OCI-LY7 (cell line): ENCODE measurements at regions of chr6 and their contacts with region 1.

Region 1: DNA sequence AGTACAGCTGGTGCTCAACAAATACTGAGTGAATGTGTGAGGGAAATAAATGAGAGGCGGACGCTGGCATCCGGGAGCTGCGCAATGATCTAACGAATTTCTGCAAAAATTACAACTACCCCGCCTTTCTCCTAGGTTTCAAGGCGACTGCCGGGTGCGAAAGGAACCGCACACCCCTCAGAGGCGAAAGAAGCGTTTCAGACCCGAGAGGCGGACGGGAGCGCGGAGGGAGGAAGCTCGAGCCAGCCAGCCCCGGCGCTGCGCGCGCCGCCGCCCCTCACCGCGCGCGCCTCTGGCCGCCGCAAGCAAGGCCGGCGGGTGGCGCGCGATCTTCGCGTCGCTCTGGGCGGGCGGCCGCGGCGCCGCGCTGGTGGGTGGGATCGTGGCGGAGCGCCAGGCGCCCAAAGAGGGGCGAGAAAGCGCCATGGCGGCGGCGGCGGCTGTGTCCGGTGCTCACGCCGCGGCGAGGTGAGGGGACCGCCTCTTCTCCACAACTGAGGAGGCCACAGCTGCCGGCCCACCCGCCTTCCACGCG is at the start of gene BLTP3A:
- DNase-seq: peak; percentile 92
- H3K4me3 ChIP-seq: peak within 1 kb of the TSS; percentile 79
- H3K27ac ChIP-seq: peak within 1 kb of the TSS; percentile 84
- H3K4me1 ChIP-seq: peaks cover 9% of the 10 kb centered on the region
- CTCF ChIP-seq: no peak; the same call in none of the 2 replicates
- total RNA-seq, gene BLTP3A: 11.4 and 11.9 TPM in 2 replicates

Region 2: DNA sequence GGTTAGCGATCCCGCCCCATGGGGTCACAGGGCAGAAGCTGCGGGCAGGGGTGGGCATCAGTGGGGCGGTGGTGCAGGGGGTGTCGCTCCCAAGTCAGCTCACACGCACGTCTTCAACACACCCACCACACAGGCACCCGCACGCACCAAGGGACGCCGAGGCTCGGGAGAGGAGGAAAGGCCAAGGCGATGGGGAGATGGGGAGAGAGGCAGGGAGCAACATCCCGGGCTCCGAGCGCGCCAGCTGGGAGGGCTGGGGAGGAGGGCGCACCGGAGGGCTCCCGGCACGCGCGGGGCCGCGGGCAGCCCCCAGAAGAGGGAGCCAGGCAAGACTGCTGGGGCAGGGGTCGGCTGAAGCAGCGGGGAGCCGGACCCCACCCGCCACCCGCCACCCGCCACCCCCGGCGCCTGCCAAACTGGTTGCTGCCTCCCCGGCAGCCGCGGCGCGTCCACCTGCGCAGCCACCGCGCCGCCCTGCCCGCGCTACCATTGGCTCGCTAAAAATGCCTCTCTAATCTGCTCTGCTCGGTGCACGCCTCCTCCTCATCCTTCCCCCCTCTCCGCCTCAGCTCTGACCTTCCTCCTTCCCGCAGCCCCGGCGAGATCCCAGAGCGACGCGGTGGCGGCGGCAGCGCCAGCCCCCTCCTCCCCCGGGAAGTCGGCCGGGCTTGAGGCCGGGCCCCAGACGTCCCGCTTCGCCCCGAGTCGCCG is 326.1 kb before region 1 on chr6 and contains the start of gene PACSIN1:
- CTCF ChIA-PET with region 1: no interaction called
- POLR2A ChIA-PET with region 1: interaction called, 3 read pairs
- intact Hi-C with region 1: loop called (anchors 5 kb)
- DNase-seq: peak; percentile 80
- H3K4me3 ChIP-seq: peak within 1 kb of the TSS; percentile 79
- H3K27ac ChIP-seq: peak within 1 kb of the TSS; percentile 79
- H3K4me1 ChIP-seq: peaks cover 66% of the 10 kb centered on the region
- CTCF ChIP-seq: no peak
- total RNA-seq, gene PACSIN1: 14.9 and 19.3 TPM in 2 replicates

Region 3: DNA sequence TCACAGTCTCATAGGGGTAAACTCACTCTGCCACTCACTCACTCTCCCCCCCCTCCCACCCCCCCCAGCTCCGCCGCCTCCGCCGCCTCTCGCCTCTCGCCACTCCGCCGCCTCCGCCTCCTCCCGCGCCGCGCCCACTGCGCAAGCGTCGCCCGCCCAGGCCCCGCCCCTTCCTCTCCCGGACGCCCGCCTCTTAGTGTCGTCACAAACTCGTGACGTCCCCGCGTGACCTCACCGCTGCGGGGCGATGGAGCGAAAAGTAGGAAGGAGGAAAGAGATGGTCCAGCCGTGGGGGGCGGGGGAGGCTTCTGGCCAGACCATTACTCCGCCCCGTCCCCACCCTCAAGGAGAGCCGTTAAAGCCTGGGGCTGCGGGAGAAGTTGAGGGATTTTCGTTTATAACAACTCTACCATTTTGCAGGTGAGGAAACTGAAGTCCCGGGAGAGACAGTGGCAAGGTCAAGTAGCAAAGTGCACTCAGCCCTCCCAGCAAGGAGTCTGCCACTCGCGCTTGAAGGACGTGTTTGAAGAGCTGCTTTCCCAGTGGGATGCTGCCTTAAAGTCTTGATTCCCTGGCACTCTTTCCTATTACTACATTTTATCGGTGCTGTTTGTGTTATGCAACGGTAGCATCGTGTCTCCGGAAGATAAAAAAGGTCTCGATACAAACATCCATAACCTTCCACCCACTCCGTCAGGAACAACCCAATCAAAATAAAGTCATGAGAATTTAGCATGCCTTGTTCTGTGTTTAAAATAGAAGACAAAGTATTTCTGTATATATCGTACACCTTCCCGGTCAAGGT is 94.8 kb before region 1 on chr6 and contains the start of gene ILRUN:
- CTCF ChIA-PET with region 1: no interaction called
- POLR2A ChIA-PET with region 1: interaction called, 4 read pairs
- intact Hi-C with region 1: loop called (anchors 1 kb)
- DNase-seq: peak; percentile 95
- H3K4me3 ChIP-seq: peak within 1 kb of the TSS; percentile 97
- H3K27ac ChIP-seq: peak within 1 kb of the TSS; percentile 65
- H3K4me1 ChIP-seq: peaks cover 44% of the 10 kb centered on the region
- CTCF ChIP-seq: no peak
- total RNA-seq, gene ILRUN: 25.6 and 27.1 TPM in 2 replicates

Region 4: GRCh38 chr6:34757687-34758274 is 34.0 kb before region 1 on chr6:
- CTCF ChIA-PET with region 1: no interaction called
- POLR2A ChIA-PET with region 1: interaction called, 6 read pairs
- intact Hi-C with region 1: loop called (anchors 1 kb)
- DNase-seq: no peak
- H3K4me3 ChIP-seq: peak overlapping the region; percentile 82
- H3K27ac ChIP-seq: peak overlapping the region; percentile 79
- H3K4me1 ChIP-seq: peaks cover 28% of the 10 kb centered on the region
- CTCF ChIP-seq: no peak

Region 5: GRCh38 chr6:34805050-34805449 is 13.3 kb after region 1 on chr6:
- CTCF ChIA-PET with region 1: no interaction called
- POLR2A ChIA-PET with region 1: interaction called, 10 read pairs
- intact Hi-C with region 1: no loop called
- DNase-seq: no peak
- H3K4me3 ChIP-seq: no peak overlapping the region
- H3K27ac ChIP-seq: no peak overlapping the region
- H3K4me1 ChIP-seq: peaks cover 3% of the 10 kb centered on the region
- CTCF ChIP-seq: no peak